ENCODE measurements at regions of chr2 and their contacts with region 1.

Region 1: GRCh38 chr2:102020596-102021181 is 28.9 kb downstream of the IL1R2 start:
- DNase-seq: peak; percentile 88 to 93 (median 88)
- ATAC-seq: peak; percentile 76 to 96 (median 94)
- H3K4me3 ChIP-seq: no peak overlapping the region
- H3K27ac ChIP-seq: peak overlapping the region in 2 of 12 donors; percentile 25 to 78
- H3K4me1 ChIP-seq: peaks cover 0 to 45% (median 15%) of the 10 kb centered on the region in 12 donors
- H3K27me3 ChIP-seq: no peaks in the 10 kb centered on the region
- CTCF ChIP-seq: peak; percentile 96 to 100 (median 99)
- POLR2A ChIP-seq: no peak

Region 2: GRCh38 chr2:101524806-101525430 is 495.8 kb before region 1 on chr2:
- intact Hi-C with region 1: no loop called
- DNase-seq: peak in 2 of 5 donors; percentile 51 to 58
- ATAC-seq: peak in 3 of 4 donors; percentile 67 to 80 (median 75)
- H3K4me3 ChIP-seq: no peak overlapping the region
- H3K27ac ChIP-seq: no peak overlapping the region
- H3K4me1 ChIP-seq: peaks cover 0 to 9% (median 2%) of the 10 kb centered on the region in 12 donors
- H3K27me3 ChIP-seq: no peaks in the 10 kb centered on the region
- CTCF ChIP-seq: no peak
- POLR2A ChIP-seq: no peak

Region 3: DNA sequence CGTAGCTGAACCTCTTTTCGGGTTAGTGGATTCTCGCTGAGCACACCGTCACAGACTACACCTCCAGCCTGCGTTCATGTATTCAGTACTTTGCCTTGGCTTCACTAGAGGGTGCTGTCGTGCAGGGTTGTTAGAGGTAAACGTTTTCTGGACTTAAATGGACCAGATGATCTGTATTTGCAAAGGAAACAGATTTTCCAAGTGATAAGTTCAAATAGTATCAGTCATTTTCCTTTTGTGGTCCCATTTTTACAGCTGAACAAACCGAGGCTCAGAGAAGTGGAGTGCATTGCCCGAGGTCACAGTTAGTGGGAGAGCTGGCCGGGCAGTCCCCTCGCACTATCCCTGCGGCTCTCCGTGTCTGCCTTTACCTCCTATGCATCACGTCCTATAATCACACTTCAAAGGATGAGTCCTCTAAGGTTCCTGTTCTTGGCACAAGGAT is 197.3 kb before region 1 on chr2:
- intact Hi-C with region 1: no loop called
- DNase-seq: peak in 4 of 5 donors; percentile 55 to 64 (median 58)
- ATAC-seq: peak in 3 of 4 donors; percentile 59 to 77 (median 66)
- H3K4me3 ChIP-seq: no peak overlapping the region
- H3K27ac ChIP-seq: peak overlapping the region in 2 of 12 donors; percentile 8 to 15
- H3K4me1 ChIP-seq: peaks cover 12 to 82% (median 60%) of the 10 kb centered on the region in 12 donors
- H3K27me3 ChIP-seq: no peaks in the 10 kb centered on the region
- CTCF ChIP-seq: peak; percentile 47 to 74 (median 61)
- POLR2A ChIP-seq: no peak

Region 4: DNA sequence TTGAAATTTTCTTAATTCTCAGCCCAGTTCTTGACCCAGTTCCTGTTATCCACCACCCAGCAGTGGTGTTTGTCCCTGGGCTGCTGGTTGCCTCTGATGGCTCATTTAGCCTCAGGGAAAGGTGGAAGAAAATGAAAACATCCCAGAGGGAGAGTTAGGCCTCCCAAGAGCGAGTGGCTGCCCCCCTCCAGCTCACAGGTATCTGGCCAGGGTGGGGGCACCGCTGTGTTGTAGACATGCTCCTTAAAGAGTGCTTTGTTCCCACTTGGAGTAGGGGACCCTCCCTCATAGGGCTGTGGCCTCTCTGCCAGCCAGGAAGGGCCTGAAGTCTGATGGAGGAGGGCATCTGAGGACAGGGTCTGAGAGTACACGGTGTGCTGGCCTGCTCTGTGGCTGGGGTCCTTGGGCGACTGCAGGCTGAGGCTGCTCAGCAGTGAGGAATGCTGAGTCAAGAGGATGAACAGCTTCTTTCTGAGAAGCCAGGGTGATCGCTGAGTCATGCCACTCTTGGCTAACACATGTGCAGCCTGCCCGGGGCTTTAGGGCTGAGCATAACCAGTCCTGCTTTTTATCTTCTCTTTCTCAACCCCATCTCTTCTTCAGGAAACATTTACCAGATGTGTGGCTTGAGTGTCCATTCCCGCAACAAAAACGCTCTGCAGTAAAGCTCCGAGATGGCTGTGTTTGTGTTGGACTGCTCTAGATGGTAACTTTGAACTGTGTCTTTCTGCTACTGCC is 43.4 kb after region 1 on chr2:
- intact Hi-C with region 1: loop called in 5 of 10 experiments (anchors 5 kb)
- DNase-seq: peak; percentile 80 to 95 (median 87)
- ATAC-seq: peak; percentile 85 to 94 (median 92)
- H3K4me3 ChIP-seq: peak overlapping the region in 3 of 12 donors; percentile 11 to 12 (median 11)
- H3K27ac ChIP-seq: peak overlapping the region; percentile 77 to 97 (median 90)
- H3K4me1 ChIP-seq: peaks cover 0 to 79% (median 52%) of the 10 kb centered on the region in 12 donors
- H3K27me3 ChIP-seq: no peaks in the 10 kb centered on the region
- CTCF ChIP-seq: no peak
- POLR2A ChIP-seq: no peak

Region 5: GRCh38 chr2:102166189-102166845 is 145.6 kb after region 1 on chr2:
- intact Hi-C with region 1: loop called (anchors 1 to 5 kb)
- DNase-seq: no peak
- ATAC-seq: peak; percentile 47 to 91 (median 81)
- H3K4me3 ChIP-seq: no peak overlapping the region
- H3K27ac ChIP-seq: no peak overlapping the region
- H3K4me1 ChIP-seq: peaks cover 0 to 13% (median 4%) of the 10 kb centered on the region in 12 donors
- H3K27me3 ChIP-seq: no peaks in the 10 kb centered on the region
- CTCF ChIP-seq: peak; percentile 36 to 79 (median 66)
- POLR2A ChIP-seq: no peak

Region 6: DNA sequence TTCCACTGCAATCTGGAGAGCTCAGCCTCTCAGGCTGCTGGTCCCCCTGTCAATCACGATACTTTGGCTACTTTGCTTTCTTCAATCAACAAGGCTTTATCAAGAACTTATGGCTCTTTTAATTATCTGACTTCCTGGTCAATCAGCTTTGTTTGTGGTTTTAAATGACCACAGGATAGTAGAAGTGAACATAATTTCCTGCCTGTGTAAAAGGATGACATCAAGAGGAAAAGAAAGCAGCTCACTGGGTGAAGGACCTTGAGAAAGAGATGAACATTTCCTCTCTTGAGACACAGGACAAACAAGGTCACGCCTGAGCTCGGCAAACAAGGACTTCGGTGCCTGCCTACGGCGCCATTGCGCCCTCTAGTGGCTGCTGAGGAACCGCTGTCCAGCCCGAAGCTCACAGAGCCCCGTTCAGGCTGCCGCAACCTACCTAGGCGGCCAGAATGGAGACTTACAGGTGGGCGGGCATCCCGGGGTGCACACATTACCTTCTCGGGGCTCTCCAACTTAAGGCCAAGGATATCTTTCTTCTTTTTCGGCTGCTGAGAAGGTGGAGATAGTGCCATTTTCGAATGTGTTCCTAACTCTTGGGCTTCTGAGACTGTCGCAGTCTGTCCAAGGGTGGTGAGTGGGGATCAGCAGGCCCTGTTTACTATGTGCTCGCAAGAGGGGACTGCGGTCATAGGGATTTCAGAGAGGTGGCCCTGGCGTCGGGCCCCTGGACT is 220.1 kb after region 1 on chr2:
- intact Hi-C with region 1: loop called (anchors 1 to 5 kb)
- DNase-seq: peak; percentile 91 to 95 (median 92)
- ATAC-seq: peak; percentile 89 to 96 (median 94)
- H3K4me3 ChIP-seq: peak overlapping the region in 6 of 12 donors; percentile 5 to 33 (median 16)
- H3K27ac ChIP-seq: peak overlapping the region; percentile 58 to 88 (median 79)
- H3K4me1 ChIP-seq: peaks cover 0 to 29% (median 11%) of the 10 kb centered on the region in 12 donors
- H3K27me3 ChIP-seq: peaks cover 0 to 2% (median 0%) of the 10 kb centered on the region in 9 donors
- CTCF ChIP-seq: peak; percentile 97 to 100 (median 99)
- POLR2A ChIP-seq: peak in 1 of 2 donors; percentile 23

Region 7: DNA sequence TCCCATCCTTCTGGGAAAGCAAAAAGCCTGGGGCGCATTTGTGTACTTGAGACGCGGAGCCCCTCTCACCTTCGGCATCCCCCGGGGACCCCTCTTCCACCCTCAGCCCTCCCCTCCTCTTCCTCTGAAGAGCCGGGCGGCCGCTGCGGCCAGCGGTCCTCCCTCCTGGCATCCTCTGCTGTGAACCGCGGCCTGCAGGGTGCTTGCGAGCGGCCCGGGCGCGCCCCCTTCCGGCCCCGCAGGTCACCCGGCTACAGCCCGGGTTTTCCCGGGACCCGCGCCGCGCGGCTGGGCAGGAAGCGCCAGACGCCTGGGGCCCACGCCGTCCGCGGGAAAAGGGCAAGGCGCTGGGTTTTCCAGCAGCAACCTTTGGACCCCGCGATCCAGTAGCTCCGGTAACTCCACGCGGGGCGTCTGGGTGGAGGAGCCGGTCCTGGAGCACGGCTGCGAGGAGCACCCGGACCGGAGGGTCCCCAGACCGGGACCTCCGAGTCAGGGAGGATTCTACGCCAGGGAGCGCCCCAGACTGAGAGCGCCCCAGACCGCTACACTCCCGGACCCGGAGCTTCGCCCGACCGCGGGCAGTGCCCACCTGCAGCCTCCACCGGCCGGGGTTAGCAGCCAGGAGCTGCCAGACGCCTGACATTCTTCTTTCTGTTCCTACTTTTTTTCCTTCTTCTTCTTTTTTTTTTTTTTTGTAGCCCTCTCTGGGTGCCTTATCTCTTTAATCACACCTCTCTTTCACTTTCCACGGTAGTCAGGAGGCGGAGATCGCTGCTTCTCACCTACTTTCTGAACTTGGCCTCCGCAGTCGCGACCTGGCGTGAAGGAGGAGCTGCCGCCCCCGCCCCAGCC is 335.1 kb after region 1 on chr2 and contains the start of gene IL18R1:
- intact Hi-C with region 1: loop called in 5 of 10 experiments (anchors 5 to 10 kb)
- DNase-seq: peak; percentile 79 to 91 (median 84)
- ATAC-seq: peak; percentile 89 to 100 (median 98)
- H3K4me3 ChIP-seq: peak within 1 kb of the TSS; percentile 45 to 82 (median 74)
- H3K27ac ChIP-seq: peak within 1 kb of the TSS in 10 of 12 donors; percentile 12 to 89 (median 66)
- H3K4me1 ChIP-seq: peaks cover 0 to 28% (median 2%) of the 10 kb centered on the region in 12 donors
- H3K27me3 ChIP-seq: peaks cover 0 to 4% (median 0%) of the 10 kb centered on the region in 9 donors
- CTCF ChIP-seq: peak; percentile 76 to 96 (median 86)
- POLR2A ChIP-seq: peak in 1 of 2 donors; percentile 37
- total RNA-seq, gene IL18R1: 0.50 to 4.3 (median 1.8) TPM

Measured in heart left ventricle (tissue), 16 donors.